ENCODE measurements at regions of chr5 and their contacts with region 1.

Region 1: GRCh38 chr5:134436523-134437339 is 25.1 kb upstream of the CDKN2AIPNL start:
- DNase-seq: peak; percentile 55
- H3K4me3 ChIP-seq: no peak overlapping the region
- H3K27ac ChIP-seq: peak overlapping the region; percentile 95
- H3K4me1 ChIP-seq: peaks cover 55% of the 10 kb centered on the region
- H3K27me3 ChIP-seq: no peaks in the 10 kb centered on the region
- CTCF ChIP-seq: no peak

Region 2: DNA sequence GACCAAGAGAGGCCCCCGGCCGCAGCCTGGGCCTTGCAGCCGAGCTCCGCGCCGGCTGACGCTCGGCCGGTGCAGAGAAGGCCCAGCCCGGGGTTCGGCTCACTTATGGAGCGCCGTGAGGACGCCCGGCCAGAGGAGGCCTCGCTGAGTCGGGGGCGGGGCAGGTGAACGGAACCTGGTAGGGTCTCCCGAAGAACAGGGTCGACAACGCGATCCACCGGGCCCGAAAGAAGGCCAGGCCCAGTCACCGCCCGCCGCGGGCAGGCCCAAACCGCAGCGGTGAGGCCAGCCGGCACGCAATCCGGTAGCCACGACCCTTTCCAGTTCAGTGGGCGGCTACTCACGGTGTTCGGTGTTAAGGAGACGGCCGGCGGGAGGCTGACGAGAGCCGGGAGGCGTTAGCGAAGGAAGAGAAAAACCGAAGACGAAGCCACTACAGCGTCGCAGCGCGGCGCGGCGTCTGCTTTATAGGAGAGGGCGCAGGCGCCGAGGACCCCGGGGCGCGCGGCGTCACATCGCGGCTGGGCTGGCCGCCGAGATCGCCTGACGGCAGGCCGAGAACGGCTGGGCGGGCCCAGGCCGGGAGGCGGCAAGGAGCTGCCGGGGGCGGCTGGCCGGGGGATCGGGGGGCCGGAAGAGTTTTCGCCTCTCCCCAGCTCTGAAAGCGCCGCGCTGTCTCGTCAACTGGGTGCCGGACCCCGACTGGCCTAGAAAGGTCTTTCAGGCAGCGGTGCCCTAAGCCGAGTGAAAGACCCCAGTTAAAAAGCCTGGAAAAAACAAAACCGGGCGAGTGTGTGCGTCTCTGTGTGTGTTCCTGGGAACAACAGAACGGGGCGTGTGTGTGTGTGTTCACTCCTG is 260.0 kb before region 1 on chr5 and contains the start of gene SKP1:
- CTCF ChIA-PET with region 1: no interaction called
- dilution Hi-C with region 1: no loop called
- in situ Hi-C with region 1: no loop called
- intact Hi-C with region 1: loop called (anchors 10 kb)
- DNase-seq: peak; percentile 84
- H3K4me3 ChIP-seq: peak within 1 kb of the TSS; percentile 56 to 95 (median 93)
- H3K27ac ChIP-seq: peak within 1 kb of the TSS; percentile 84
- H3K4me1 ChIP-seq: peaks cover 15% of the 10 kb centered on the region
- H3K27me3 ChIP-seq: no peaks in the 10 kb centered on the region
- CTCF ChIP-seq: no peak
- total RNA-seq, gene SKP1: 146 to 231 TPM

Region 3: GRCh38 chr5:134370871-134371833 is 65.6 kb before region 1 on chr5 and contains the start of gene UBE2B:
- CTCF ChIA-PET with region 1: no interaction called
- dilution Hi-C with region 1: no loop called
- in situ Hi-C with region 1: no loop called
- intact Hi-C with region 1: loop called (anchors 1 kb)
- DNase-seq: peak; percentile 99
- H3K4me3 ChIP-seq: peak within 1 kb of the TSS; percentile 94 to 97 (median 95)
- H3K27ac ChIP-seq: peak within 1 kb of the TSS; percentile 89
- H3K4me1 ChIP-seq: peaks cover 9% of the 10 kb centered on the region
- H3K27me3 ChIP-seq: no peaks in the 10 kb centered on the region
- CTCF ChIP-seq: no peak
- total RNA-seq, gene UBE2B: 37.2 to 83.3 TPM

Region 4: GRCh38 chr5:134451936-134452505 is 15.3 kb after region 1 on chr5:
- CTCF ChIA-PET with region 1: no interaction called
- dilution Hi-C with region 1: no loop called
- in situ Hi-C with region 1: no loop called
- intact Hi-C with region 1: no loop called
- DNase-seq: peak; percentile 70
- H3K4me3 ChIP-seq: no peak overlapping the region
- H3K27ac ChIP-seq: no peak overlapping the region
- H3K4me1 ChIP-seq: peaks cover 15% of the 10 kb centered on the region
- H3K27me3 ChIP-seq: no peaks in the 10 kb centered on the region
- CTCF ChIP-seq: no peak

Region 5: DNA sequence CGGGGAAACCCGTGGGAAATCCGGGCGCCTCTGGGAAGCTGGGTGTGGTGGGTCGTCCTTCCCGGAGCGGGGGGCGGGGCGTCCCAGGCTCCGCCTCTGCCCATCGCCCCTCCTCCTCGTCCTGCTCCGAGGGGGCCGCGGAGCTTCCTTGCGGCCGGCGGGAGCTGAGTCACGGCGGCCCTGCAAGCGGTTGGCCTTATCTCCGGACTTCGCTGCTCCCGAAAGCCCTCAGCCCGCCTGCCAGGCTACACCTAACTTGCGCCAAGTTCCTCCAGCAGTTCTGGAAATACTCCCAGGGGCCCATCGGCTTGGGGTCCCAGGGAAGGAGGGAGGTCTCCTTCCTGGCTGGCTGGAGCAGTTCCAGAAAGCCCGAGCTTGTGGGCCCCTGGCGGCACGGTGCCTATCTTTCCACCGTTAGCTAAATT is 29.1 kb after region 1 on chr5:
- CTCF ChIA-PET with region 1: no interaction called
- dilution Hi-C with region 1: no loop called
- in situ Hi-C with region 1: no loop called
- intact Hi-C with region 1: loop called (anchors 1 kb)
- DNase-seq: peak; percentile 86
- H3K4me3 ChIP-seq: peak overlapping the region in 2 of 3 experiments; percentile 20 to 36
- H3K27ac ChIP-seq: peak overlapping the region; percentile 81
- H3K4me1 ChIP-seq: peaks cover 34% of the 10 kb centered on the region
- H3K27me3 ChIP-seq: no peaks in the 10 kb centered on the region
- CTCF ChIP-seq: no peak

Region 6: GRCh38 chr5:134511788-134512650 is 75.3 kb after region 1 on chr5:
- CTCF ChIA-PET with region 1: no interaction called
- dilution Hi-C with region 1: no loop called
- in situ Hi-C with region 1: no loop called
- intact Hi-C with region 1: loop called (anchors 1 kb)
- DNase-seq: peak; percentile 35
- H3K4me3 ChIP-seq: no peak overlapping the region
- H3K27ac ChIP-seq: peak overlapping the region; percentile 80
- H3K4me1 ChIP-seq: peaks cover 44% of the 10 kb centered on the region
- H3K27me3 ChIP-seq: no peaks in the 10 kb centered on the region
- CTCF ChIP-seq: peak; percentile 25 to 70

Region 7: DNA sequence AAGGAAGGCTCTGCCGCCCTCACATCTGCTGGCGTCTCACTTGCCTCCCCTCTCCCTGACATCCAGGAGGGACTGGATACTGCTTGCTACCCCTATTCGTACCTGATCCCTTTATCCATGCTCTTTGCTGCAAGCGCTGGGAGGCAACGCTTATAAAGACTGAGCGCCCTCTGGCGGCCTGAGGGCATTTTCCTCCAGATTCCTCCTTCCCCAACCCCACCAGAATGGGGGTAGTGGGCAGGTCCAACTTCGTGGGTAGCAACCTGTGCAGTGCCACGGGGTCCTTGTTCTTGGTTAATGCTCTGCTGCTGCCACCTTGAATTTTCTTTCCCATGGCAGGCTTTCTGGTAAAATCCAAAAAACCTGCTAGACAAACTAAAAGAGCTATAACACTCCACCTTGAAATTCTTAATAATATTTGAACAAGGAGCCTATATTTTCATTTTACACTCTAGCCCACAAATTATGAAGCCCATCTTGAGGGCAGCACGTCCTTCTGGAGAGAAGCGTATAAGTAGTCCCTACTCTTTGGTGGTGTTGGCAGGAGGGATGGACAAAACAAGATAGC is 141.1 kb after region 1 on chr5:
- CTCF ChIA-PET with region 1: no interaction called
- dilution Hi-C with region 1: no loop called
- in situ Hi-C with region 1: no loop called
- intact Hi-C with region 1: loop called (anchors 1 kb)
- DNase-seq: peak; percentile 48
- H3K4me3 ChIP-seq: no peak overlapping the region
- H3K27ac ChIP-seq: no peak overlapping the region
- H3K4me1 ChIP-seq: peaks cover 10% of the 10 kb centered on the region
- H3K27me3 ChIP-seq: no peaks in the 10 kb centered on the region
- CTCF ChIP-seq: peak; percentile 84 to 87

Measured in mammary epithelial cell (primary cell).